ENCODE measurements at regions of chr18 and their contacts with region 1.

Region 1: GRCh38 chr18:44758861-44759631 is 78.4 kb downstream of the SETBP1 start:
- DNase-seq: peak in 3 of 9 donors; percentile 1 to 41 (median 9)
- ATAC-seq: peak; percentile 86
- H3K4me3 ChIP-seq: peak overlapping the region; percentile 15
- H3K4me3 Mint-ChIP-seq: peak overlapping the region in 9 of 10 donors; percentile 42 to 74 (median 68)
- H3K27ac ChIP-seq: no peak overlapping the region
- H3K27ac Mint-ChIP-seq: peak overlapping the region; percentile 32 to 92 (median 74)
- H3K4me1 ChIP-seq: peaks cover 0 to 16% of the 10 kb centered on the region in 2 donors
- H3K4me1 Mint-ChIP-seq: peaks cover 15 to 31% (median 21%) of the 10 kb centered on the region in 7 donors
- H3K27me3 ChIP-seq: no peaks in the 10 kb centered on the region
- H3K27me3 Mint-ChIP-seq: peaks cover 0 to 17% (median 0%) of the 10 kb centered on the region in 5 donors

Region 2: GRCh38 chr18:44799907-44800421 is 40.9 kb after region 1 on chr18:
- CTCF ChIA-PET with region 1: no interaction called
- POLR2A ChIA-PET with region 1: no interaction called
- intact Hi-C with region 1: loop called in 1 of 2 experiments (anchors 2 kb)
- DNase-seq: no peak
- ATAC-seq: no peak
- H3K4me3 ChIP-seq: no peak overlapping the region
- H3K4me3 Mint-ChIP-seq: peak overlapping the region in 1 of 10 donors; percentile 34
- H3K27ac ChIP-seq: no peak overlapping the region
- H3K27ac Mint-ChIP-seq: peak overlapping the region in 1 of 9 donors; percentile 61
- H3K4me1 ChIP-seq: peaks cover 0 to 9% of the 10 kb centered on the region in 2 donors
- H3K4me1 Mint-ChIP-seq: peaks cover 0 to 40% (median 0%) of the 10 kb centered on the region in 7 donors
- H3K27me3 ChIP-seq: no peaks in the 10 kb centered on the region
- H3K27me3 Mint-ChIP-seq: peaks cover 0 to 3% (median 0%) of the 10 kb centered on the region in 5 donors

Region 3: DNA sequence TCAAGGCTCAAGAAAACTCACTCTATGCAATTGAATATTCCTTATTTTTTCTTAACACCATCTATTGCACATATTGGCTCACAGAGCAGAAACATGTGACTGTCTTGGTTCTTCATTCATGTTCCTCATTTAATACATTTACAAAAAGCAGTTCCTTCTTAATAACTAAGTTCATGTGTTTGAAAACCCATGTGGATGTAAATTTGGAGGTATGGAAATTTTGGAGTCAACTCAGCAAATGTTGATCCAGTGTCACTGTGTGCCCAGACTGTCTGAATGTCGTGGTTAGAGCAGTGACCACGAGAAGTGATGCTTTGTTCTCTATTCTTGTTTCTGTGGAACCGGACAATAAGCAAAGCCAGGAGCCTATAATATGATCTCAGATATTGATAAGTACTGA is 220.7 kb after region 1 on chr18:
- CTCF ChIA-PET with region 1: no interaction called
- POLR2A ChIA-PET with region 1: no interaction called
- intact Hi-C with region 1: no loop called
- DNase-seq: no peak
- ATAC-seq: peak; percentile 36
- H3K4me3 ChIP-seq: no peak overlapping the region
- H3K4me3 Mint-ChIP-seq: no peak overlapping the region
- H3K27ac ChIP-seq: no peak overlapping the region
- H3K27ac Mint-ChIP-seq: no peak overlapping the region
- H3K4me1 ChIP-seq: no peaks in the 10 kb centered on the region
- H3K4me1 Mint-ChIP-seq: peaks cover 0 to 3% (median 0%) of the 10 kb centered on the region in 7 donors
- H3K27me3 ChIP-seq: no peaks in the 10 kb centered on the region
- H3K27me3 Mint-ChIP-seq: peaks cover 0 to 2% (median 0%) of the 10 kb centered on the region in 5 donors